Heart left ventricle (tissue), 16 donors: ENCODE measurements at regions of chr11 and their contacts with region 1.

Region 1: DNA sequence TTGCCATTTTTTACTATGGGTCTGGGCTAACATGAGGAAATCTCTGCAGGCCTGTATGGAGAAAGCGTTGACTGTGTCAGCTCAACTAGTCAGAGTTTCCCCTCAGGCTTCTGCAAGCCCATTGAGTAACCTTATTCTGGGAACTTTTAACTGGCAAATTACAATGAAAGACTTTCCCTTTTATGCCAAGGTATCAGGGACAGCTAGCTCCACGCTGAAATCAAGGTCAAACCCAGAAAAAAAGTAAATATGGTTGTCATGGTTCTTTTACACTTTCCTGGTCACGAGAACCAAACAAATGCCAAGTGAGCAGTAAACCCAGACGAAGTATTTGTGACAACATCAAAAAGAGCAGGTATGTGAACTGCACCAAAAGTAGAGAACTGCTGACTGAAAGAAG is 13.8 kb downstream of the OSBP start:
- DNase-seq: no peak
- ATAC-seq: no peak
- H3K4me3 ChIP-seq: no peak overlapping the region
- H3K27ac ChIP-seq: no peak overlapping the region
- H3K4me1 ChIP-seq: peaks cover 0 to 3% (median 0%) of the 10 kb centered on the region in 12 donors
- H3K27me3 ChIP-seq: no peaks in the 10 kb centered on the region
- CTCF ChIP-seq: no peak
- POLR2A ChIP-seq: no peak

Region 2: DNA sequence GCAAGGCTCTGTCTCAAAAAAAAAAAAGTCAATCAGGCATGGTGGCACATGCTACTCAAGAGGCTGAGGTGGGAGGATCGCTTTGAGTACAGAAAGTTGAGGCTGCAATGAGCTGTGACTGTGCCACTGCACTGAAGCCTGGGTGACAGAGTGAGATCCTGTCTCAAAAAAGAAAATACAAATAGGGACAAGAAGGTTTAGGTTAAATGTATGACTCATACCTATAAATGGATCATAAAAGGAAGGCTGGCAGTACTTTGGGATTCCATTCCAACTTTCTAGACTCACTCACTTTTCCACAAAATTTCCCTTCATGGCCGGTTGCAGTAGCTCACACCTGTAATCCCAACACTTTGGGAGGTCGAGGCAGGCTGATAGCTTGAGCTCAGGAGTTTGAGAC is 39.4 kb after region 1 on chr11:
- intact Hi-C with region 1: loop called in 1 of 10 experiments (anchors 5 kb)
- DNase-seq: no peak
- ATAC-seq: no peak
- H3K4me3 ChIP-seq: no peak overlapping the region
- H3K27ac ChIP-seq: no peak overlapping the region
- H3K4me1 ChIP-seq: no peaks in the 10 kb centered on the region
- H3K27me3 ChIP-seq: no peaks in the 10 kb centered on the region
- CTCF ChIP-seq: no peak
- POLR2A ChIP-seq: no peak

Region 3: DNA sequence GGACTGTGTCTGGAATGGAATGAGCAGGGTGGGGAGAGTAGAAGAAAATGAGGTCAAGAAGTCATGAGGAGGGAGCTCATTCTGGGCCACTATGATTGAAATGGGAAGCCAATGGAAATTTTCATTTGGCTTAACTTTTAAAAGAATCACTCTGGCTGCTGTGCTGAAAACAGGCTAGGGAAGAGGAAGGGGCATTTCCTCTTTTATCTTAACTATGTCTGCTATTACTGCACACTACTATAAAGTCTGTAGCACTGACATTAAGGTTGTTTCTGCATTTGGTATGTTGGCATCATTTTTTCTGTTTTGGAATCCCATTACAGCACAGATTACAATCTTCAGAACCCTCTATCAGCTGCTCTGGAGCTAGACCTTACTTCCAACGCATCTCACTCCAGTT is 58.8 kb after region 1 on chr11:
- intact Hi-C with region 1: loop called in 4 of 10 experiments (anchors 10 kb)
- DNase-seq: no peak
- ATAC-seq: no peak
- H3K4me3 ChIP-seq: no peak overlapping the region
- H3K27ac ChIP-seq: peak overlapping the region in 1 of 12 donors; percentile 27
- H3K4me1 ChIP-seq: peaks cover 0 to 52% (median 3%) of the 10 kb centered on the region in 12 donors
- H3K27me3 ChIP-seq: no peaks in the 10 kb centered on the region
- CTCF ChIP-seq: no peak
- POLR2A ChIP-seq: no peak